HEK293T (cell line): ENCODE measurements at regions of chr16 and their contacts with region 1.

Region 1: GRCh38 chr16:48385272-48386150 is at the start of gene SIAH1:
- DNase-seq: peak; percentile 92

Region 2: DNA sequence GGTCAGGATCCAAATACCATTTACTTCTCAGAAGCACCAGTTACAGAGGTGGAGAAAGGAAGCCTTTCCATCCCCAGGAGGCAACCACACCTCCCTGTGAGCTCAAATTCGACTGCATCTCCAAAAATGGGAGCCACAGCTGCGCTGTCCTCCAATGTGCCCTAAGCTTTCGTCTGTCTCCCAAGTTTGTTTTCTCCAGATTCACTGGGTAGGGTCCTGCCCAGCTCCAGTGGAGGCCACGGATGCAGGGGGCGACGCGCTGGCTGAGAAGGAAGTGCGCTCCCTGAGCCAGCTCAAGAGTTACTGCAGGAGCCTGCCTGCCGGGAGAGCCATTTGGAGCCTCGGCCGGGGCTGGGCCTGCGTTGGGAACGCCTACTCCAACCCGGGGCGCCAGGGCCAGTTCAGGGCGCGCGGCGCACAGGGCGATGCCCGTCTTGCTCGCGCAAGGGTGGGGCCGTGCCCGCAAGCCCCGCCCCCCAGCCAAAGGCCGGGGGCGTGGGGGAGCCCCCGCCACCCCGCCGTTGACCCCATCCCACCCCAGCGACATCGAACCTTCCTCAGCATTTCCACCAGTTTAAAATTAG is 19.8 kb before region 1 on chr16:
- CTCF ChIA-PET with region 1: interaction called, 3 read pairs
- POLR2A ChIA-PET with region 1: interaction called, 44 read pairs
- DNase-seq: peak; percentile 82